Ovary (tissue), 10 donors: ENCODE measurements at regions of chr19 and their contacts with region 1.

Region 1: GRCh38 chr19:11924886-11925650 is at the start of gene ZNF700:
- DNase-seq: peak; percentile 93 to 97 (median 95)
- H3K4me3 ChIP-seq: peak within 1 kb of the TSS; percentile 85
- H3K27ac ChIP-seq: peak within 1 kb of the TSS; percentile 38 to 91
- H3K4me1 ChIP-seq: peaks cover 15% of the 10 kb centered on the region
- H3K27me3 ChIP-seq: no peaks in the 10 kb centered on the region
- CTCF ChIP-seq: peak in 1 of 3 donors; percentile 20
- EP300 ChIP-seq: peak; percentile 74
- POLR2A ChIP-seq: peak; percentile 76
- total RNA-seq, gene ZNF700: 8.6 to 22.3 (median 14.0) TPM

Region 2: GRCh38 chr19:11832253-11832912 is 92.7 kb before region 1 on chr19:
- intact Hi-C with region 1: no loop called
- DNase-seq: no peak
- H3K4me3 ChIP-seq: no peak overlapping the region
- H3K27ac ChIP-seq: no peak overlapping the region
- H3K4me1 ChIP-seq: no peaks in the 10 kb centered on the region
- H3K27me3 ChIP-seq: no peaks in the 10 kb centered on the region
- CTCF ChIP-seq: no peak
- EP300 ChIP-seq: no peak
- POLR2A ChIP-seq: no peak

Region 3: DNA sequence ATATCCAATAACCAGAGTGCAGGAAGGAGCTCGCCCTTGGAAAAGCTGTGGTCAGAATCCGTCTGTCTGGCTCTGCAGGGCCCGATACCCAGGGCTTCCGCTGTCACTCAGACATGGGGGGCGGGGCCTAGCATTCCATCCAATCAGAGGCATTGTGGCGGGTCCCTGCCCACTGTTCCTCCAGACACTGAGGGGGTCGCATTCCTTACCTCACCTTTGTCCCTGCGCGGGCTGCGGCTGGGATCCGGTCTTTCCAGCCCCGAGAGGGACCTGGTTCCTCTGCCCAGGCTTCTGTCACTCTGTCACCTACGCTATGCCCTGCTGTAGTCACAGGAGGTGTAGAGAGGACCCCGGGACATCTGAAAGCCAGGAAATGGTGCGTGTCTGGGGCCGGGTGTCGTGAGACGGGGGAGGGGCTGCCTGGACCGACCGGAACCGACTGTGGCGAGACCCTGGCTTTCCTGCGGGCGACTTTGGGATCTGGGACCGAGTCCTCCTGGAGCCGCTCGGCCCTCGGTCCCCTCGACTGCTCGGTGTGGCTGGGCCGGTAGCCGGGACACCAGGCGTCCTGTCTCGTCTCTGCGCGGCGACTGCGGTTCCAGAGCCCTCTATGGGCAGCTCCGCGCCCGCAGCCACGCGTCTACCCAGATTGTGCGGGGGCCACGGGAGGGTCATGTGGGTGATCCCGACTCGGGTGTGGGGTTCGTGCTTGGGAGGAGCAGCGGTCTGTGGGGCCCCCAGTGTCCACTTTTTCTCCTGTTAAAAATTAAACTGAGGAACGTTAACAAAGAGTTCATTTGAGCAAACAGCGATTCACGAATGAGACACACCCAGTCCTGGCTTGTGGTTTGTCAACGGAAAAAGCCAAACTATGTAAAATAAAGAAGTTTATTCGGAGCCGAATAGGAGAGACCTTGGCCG is 37.2 kb before region 1 on chr19 and contains the start of gene ZNF69:
- intact Hi-C with region 1: loop called in 1 of 4 experiments (anchors 5 kb)
- DNase-seq: peak; percentile 83 to 89 (median 86)
- H3K4me3 ChIP-seq: peak within 1 kb of the TSS; percentile 84
- H3K27ac ChIP-seq: peak within 1 kb of the TSS; percentile 63 to 75
- H3K4me1 ChIP-seq: peaks cover 5% of the 10 kb centered on the region
- H3K27me3 ChIP-seq: no peaks in the 10 kb centered on the region
- CTCF ChIP-seq: no peak
- EP300 ChIP-seq: no peak
- POLR2A ChIP-seq: peak; percentile 40
- total RNA-seq, gene ZNF69: 12.6 to 25.5 (median 15.4) TPM

Region 4: GRCh38 chr19:12294249-12295158 is 369.4 kb after region 1 on chr19 and contains the start of gene ZNF44:
- intact Hi-C with region 1: no loop called
- DNase-seq: peak; percentile 96 to 98 (median 98)
- H3K4me3 ChIP-seq: peak within 1 kb of the TSS; percentile 91
- H3K27ac ChIP-seq: peak within 1 kb of the TSS; percentile 59 to 91
- H3K4me1 ChIP-seq: peaks cover 8% of the 10 kb centered on the region
- H3K27me3 ChIP-seq: no peaks in the 10 kb centered on the region
- CTCF ChIP-seq: peak in 1 of 3 donors; percentile 16
- EP300 ChIP-seq: no peak
- POLR2A ChIP-seq: peak; percentile 71
- total RNA-seq, gene ZNF44: 10.1 to 33.3 (median 16.6) TPM